CD8-positive, alpha-beta T cell (primary cell): ENCODE measurements at regions of chr22 and their contacts with region 1.

Region 1: DNA sequence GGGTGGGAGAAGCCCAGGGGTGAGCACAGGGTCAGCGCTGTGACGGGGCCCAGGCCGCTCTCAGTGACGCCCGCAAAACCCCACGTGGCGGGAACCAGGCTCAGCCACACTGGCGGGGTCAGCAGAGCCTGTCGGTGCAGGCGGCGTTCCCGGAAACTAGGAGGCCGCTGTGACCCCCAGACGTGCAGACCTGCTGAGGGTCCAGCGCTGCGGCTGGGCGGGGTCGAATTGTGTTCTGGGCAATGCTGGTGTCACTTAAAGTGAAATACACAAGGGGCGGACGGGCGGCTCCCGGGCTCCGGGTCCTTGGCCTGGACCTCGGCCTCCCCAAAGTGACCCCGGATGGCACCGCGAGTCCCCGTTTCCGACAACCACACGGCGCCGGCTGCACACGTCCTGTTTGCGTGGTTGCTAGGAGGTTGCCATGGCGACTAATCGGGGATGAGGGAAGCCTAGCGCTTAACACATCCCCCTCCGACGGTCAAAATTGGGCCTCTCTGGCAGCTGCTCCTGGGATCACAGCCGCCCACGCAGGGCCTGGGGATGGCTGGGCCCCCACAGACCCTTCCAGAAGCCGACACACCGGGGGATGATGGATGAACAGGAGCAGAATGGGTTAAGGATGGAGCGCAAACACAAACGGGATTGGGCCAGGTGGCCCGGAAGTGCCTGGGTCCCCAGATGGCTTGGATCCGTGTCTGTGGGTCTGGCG is 81.7 kb upstream of the PRR5 start:
- DNase-seq: peak; percentile 80 to 96 (median 90)
- ATAC-seq: peak; percentile 83
- H3K4me3 ChIP-seq: peak overlapping the region; percentile 44 to 47
- H3K4me3 Mint-ChIP-seq: no peak overlapping the region
- H3K27ac ChIP-seq: peak overlapping the region; percentile 58 to 65
- H3K27ac Mint-ChIP-seq: no peak overlapping the region
- H3K4me1 ChIP-seq: peaks cover 22% of the 10 kb centered on the region
- H3K4me1 Mint-ChIP-seq: peaks cover 7% of the 10 kb centered on the region
- H3K27me3 ChIP-seq: peaks cover 0 to 8% of the 10 kb centered on the region in 2 experiments
- H3K27me3 Mint-ChIP-seq: no peaks in the 10 kb centered on the region
- CTCF ChIP-seq: no peak

Region 2: GRCh38 chr22:44289414-44290171 is 330.7 kb before region 1 on chr22:
- CTCF ChIA-PET with region 1: no interaction called
- POLR2A ChIA-PET with region 1: no interaction called
- intact Hi-C with region 1: no loop called
- DNase-seq: no peak
- ATAC-seq: no peak
- H3K4me3 ChIP-seq: no peak overlapping the region
- H3K4me3 Mint-ChIP-seq: no peak overlapping the region
- H3K27ac ChIP-seq: no peak overlapping the region
- H3K27ac Mint-ChIP-seq: no peak overlapping the region
- H3K4me1 ChIP-seq: no peaks in the 10 kb centered on the region
- H3K4me1 Mint-ChIP-seq: no peaks in the 10 kb centered on the region
- H3K27me3 ChIP-seq: no peaks in the 10 kb centered on the region
- H3K27me3 Mint-ChIP-seq: peaks cover 9% of the 10 kb centered on the region
- CTCF ChIP-seq: no peak

Region 3: GRCh38 chr22:44455151-44455962 is 164.9 kb before region 1 on chr22:
- CTCF ChIA-PET with region 1: no interaction called
- POLR2A ChIA-PET with region 1: no interaction called
- intact Hi-C with region 1: loop called in 1 of 2 experiments (anchors 1 kb)
- DNase-seq: peak; percentile 19 to 87 (median 58)
- ATAC-seq: peak; percentile 75
- H3K4me3 ChIP-seq: peak overlapping the region in 1 of 2 experiments; percentile 0
- H3K4me3 Mint-ChIP-seq: peak overlapping the region; percentile 43
- H3K27ac ChIP-seq: peak overlapping the region; percentile 33 to 78
- H3K27ac Mint-ChIP-seq: peak overlapping the region; percentile 91
- H3K4me1 ChIP-seq: peaks cover 23% of the 10 kb centered on the region
- H3K4me1 Mint-ChIP-seq: peaks cover 27% of the 10 kb centered on the region
- H3K27me3 ChIP-seq: no peaks in the 10 kb centered on the region
- H3K27me3 Mint-ChIP-seq: no peaks in the 10 kb centered on the region
- CTCF ChIP-seq: no peak

Region 4: GRCh38 chr22:44669561-44669976 is 49.3 kb after region 1 on chr22:
- CTCF ChIA-PET with region 1: interaction called, 12 read pairs
- POLR2A ChIA-PET with region 1: interaction called, 3 read pairs
- intact Hi-C with region 1: loop called (anchors 2 kb)
- DNase-seq: peak in 2 of 9 experiments; percentile 40 to 57
- ATAC-seq: no peak
- H3K4me3 ChIP-seq: peak overlapping the region; percentile 60 to 69
- H3K4me3 Mint-ChIP-seq: peak overlapping the region; percentile 78
- H3K27ac ChIP-seq: no peak overlapping the region
- H3K27ac Mint-ChIP-seq: peak overlapping the region; percentile 73
- H3K4me1 ChIP-seq: peaks cover 63% of the 10 kb centered on the region
- H3K4me1 Mint-ChIP-seq: peaks cover 67% of the 10 kb centered on the region
- H3K27me3 ChIP-seq: no peaks in the 10 kb centered on the region
- H3K27me3 Mint-ChIP-seq: no peaks in the 10 kb centered on the region
- CTCF ChIP-seq: peak; percentile 13